HCT116 (cell line): ENCODE measurements at regions of chr1 and their contacts with region 1.

Region 1: GRCh38 chr1:235783148-235783776 is 83.4 kb downstream of the LYST start:
- DNase-seq: peak; percentile 26
- ATAC-seq: peak; percentile 49
- H3K4me3 ChIP-seq: no peak overlapping the region
- H3K27ac ChIP-seq: no peak overlapping the region
- H3K4me1 ChIP-seq: no peaks in the 10 kb centered on the region
- H3K27me3 ChIP-seq: no peaks in the 10 kb centered on the region
- CTCF ChIP-seq: peak; percentile 23 to 78 (median 29); a peak in 4 of 6 replicates
- POLR2A ChIP-seq: no peak
- RAD21 ChIP-seq: peak; percentile 80

Region 2: GRCh38 chr1:235100194-235100772 is 683.0 kb before region 1 on chr1:
- CTCF ChIA-PET with region 1: no interaction called
- POLR2A ChIA-PET with region 1: no interaction called
- RAD21 ChIA-PET with region 1: no interaction called
- intact Hi-C with region 1: loop called (anchors 5 kb)
- DNase-seq: no peak
- ATAC-seq: no peak
- H3K4me3 ChIP-seq: no peak overlapping the region
- H3K27ac ChIP-seq: no peak overlapping the region
- H3K4me1 ChIP-seq: peaks cover 4 to 14% of the 10 kb centered on the region in 2 experiments; a peak in 3 of 4 replicates
- H3K27me3 ChIP-seq: no peaks in the 10 kb centered on the region
- CTCF ChIP-seq: no peak
- POLR2A ChIP-seq: no peak
- RAD21 ChIP-seq: no peak

Region 3: GRCh38 chr1:235253219-235253962 is 529.9 kb before region 1 on chr1:
- CTCF ChIA-PET with region 1: no interaction called
- POLR2A ChIA-PET with region 1: no interaction called
- RAD21 ChIA-PET with region 1: no interaction called
- intact Hi-C with region 1: loop called (anchors 5 kb)
- DNase-seq: peak; percentile 54
- ATAC-seq: peak; percentile 100
- H3K4me3 ChIP-seq: no peak overlapping the region
- H3K27ac ChIP-seq: no peak overlapping the region
- H3K4me1 ChIP-seq: no peaks in the 10 kb centered on the region
- H3K27me3 ChIP-seq: no peaks in the 10 kb centered on the region
- CTCF ChIP-seq: peak; percentile 84 to 89 (median 87)
- POLR2A ChIP-seq: no peak
- RAD21 ChIP-seq: peak; percentile 89

Region 4: DNA sequence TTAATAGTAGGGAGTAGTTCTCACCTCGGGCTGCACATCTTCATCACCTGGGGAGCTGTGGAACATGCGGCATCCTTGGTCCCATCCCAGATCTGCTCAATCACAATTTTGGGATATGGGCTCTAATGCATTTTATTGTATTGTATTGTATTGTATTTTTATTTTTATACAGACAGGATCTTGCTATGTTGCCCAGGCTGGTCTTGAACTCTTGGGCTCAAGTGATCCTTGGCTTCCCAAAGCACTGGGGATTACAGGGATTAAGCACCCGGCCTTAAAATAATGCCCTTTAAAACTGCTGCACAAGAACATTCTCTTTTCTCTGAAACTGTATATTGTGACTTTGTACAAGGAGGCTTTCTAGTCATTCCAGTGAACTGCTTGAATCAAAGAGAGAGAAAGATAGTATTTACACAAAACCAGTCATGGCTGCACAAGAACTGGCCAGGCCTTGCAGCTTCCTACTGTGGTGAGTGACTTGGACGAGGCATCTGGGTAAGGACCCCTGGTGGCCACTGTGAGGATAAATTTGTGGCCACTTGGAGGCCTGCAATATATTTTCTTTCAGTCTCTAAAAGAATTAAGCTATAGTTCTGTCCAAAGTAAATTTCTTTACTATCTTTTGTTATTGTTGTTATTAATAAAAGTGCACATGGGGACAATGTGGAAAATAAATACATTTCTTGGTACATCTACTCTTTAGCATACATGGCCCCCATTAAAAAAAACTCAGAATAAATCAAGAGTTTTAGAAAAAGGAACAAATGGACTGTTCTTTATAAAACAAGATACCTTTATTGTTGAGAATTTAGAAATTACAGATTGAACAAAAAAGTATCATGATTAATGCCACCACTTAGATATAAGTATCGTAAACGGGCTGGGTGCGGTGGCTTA is 368.0 kb before region 1 on chr1:
- CTCF ChIA-PET with region 1: interaction called, 3 read pairs
- POLR2A ChIA-PET with region 1: no interaction called
- RAD21 ChIA-PET with region 1: no interaction called
- intact Hi-C with region 1: loop called (anchors 5 kb)
- DNase-seq: peak; percentile 59
- ATAC-seq: peak; percentile 83
- H3K4me3 ChIP-seq: no peak overlapping the region
- H3K27ac ChIP-seq: no peak overlapping the region
- H3K4me1 ChIP-seq: peaks cover 5 to 21% of the 10 kb centered on the region in 2 experiments; a peak in 3 of 4 replicates
- H3K27me3 ChIP-seq: no peaks in the 10 kb centered on the region
- CTCF ChIP-seq: peak; percentile 77 to 84 (median 80)
- POLR2A ChIP-seq: no peak
- RAD21 ChIP-seq: peak; percentile 79

Region 5: DNA sequence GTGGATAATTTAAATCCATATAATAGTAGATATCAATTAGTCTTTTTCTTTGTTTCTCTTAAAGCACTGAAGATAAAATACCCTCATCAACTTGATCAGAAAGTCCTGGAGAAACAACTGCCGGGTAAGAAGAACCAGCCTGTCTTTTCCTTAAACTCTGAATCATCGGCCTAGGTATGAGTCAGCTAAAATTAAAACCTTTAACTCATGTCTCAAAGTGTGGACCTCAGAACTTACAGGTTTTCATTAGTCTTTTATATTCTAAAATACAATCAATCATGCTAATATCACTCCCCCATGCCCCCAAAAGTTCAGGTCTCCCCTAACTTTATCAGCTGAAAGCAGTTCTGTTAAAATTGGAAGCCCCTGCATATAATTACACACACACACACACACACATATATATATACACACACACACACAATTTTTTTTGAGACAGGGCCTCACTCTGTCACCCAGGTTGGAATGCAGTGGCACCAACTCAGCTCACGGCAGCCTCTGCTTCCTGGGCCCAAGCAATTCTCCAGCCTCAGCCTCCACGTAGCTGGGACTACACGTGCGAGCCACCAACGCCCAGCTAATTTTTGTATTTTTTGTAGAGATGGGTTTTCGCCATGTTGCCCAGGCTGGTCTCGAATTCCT is 340.4 kb before region 1 on chr1:
- CTCF ChIA-PET with region 1: no interaction called
- POLR2A ChIA-PET with region 1: no interaction called
- RAD21 ChIA-PET with region 1: no interaction called
- intact Hi-C with region 1: loop called (anchors 10 kb)
- DNase-seq: peak; percentile 15
- ATAC-seq: peak; percentile 62; the same call in 1 of the 2 replicates
- H3K4me3 ChIP-seq: no peak overlapping the region
- H3K27ac ChIP-seq: peak overlapping the region; percentile 75
- H3K4me1 ChIP-seq: peaks cover 2 to 13% of the 10 kb centered on the region in 2 experiments; a peak in 3 of 4 replicates
- H3K27me3 ChIP-seq: no peaks in the 10 kb centered on the region
- CTCF ChIP-seq: no peak
- POLR2A ChIP-seq: no peak
- RAD21 ChIP-seq: no peak

Region 6: GRCh38 chr1:235513495-235514366 is 269.5 kb before region 1 on chr1:
- CTCF ChIA-PET with region 1: interaction called, 4 read pairs
- POLR2A ChIA-PET with region 1: no interaction called
- RAD21 ChIA-PET with region 1: no interaction called
- intact Hi-C with region 1: loop called (anchors 2 kb)
- DNase-seq: peak; percentile 59
- ATAC-seq: peak; percentile 72
- H3K4me3 ChIP-seq: no peak overlapping the region
- H3K27ac ChIP-seq: no peak overlapping the region
- H3K4me1 ChIP-seq: no peaks in the 10 kb centered on the region
- H3K27me3 ChIP-seq: no peaks in the 10 kb centered on the region
- CTCF ChIP-seq: peak; percentile 91 to 92 (median 91)
- POLR2A ChIP-seq: no peak
- RAD21 ChIP-seq: peak; percentile 92

Region 7: DNA sequence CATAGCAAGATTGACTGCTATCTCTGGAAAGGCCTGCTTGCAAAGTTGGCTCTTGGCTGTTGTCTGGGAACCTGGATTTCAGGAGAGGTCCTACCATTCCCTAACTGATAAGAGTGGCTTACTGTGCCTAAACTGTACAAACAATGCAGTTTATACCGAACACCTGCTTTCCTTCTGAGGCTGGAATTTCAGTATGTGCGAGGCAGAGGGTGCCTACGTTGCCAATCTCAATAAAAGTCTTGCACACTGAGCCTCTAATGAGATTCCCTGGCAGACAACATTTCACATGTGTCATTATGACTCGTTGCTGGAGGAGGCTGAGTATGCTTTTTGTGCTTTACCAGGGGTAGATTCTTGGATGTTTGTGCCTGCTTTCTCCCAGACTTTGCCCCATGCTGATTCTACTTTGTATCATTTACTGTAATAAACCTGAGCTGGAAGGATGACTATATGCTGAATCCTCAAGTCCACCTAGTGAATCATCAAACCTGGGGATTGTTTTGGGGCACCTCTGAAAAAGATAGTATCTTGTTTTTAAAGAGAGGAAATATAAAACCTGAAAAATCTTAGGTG is 74.8 kb before region 1 on chr1:
- CTCF ChIA-PET with region 1: no interaction called
- POLR2A ChIA-PET with region 1: no interaction called
- RAD21 ChIA-PET with region 1: no interaction called
- intact Hi-C with region 1: no loop called
- DNase-seq: peak; percentile 79
- ATAC-seq: peak; percentile 80
- H3K4me3 ChIP-seq: peak overlapping the region in 1 of 2 experiments; percentile 16; a peak in 1 of 4 replicates
- H3K27ac ChIP-seq: peak overlapping the region; percentile 25; the same call in 1 of the 2 replicates
- H3K4me1 ChIP-seq: peaks cover 0 to 26% of the 10 kb centered on the region in 2 experiments; a peak in 2 of 4 replicates
- H3K27me3 ChIP-seq: no peaks in the 10 kb centered on the region
- CTCF ChIP-seq: no peak
- POLR2A ChIP-seq: no peak
- RAD21 ChIP-seq: peak; percentile 18; the same call in 1 of the 2 replicates

Region 8: DNA sequence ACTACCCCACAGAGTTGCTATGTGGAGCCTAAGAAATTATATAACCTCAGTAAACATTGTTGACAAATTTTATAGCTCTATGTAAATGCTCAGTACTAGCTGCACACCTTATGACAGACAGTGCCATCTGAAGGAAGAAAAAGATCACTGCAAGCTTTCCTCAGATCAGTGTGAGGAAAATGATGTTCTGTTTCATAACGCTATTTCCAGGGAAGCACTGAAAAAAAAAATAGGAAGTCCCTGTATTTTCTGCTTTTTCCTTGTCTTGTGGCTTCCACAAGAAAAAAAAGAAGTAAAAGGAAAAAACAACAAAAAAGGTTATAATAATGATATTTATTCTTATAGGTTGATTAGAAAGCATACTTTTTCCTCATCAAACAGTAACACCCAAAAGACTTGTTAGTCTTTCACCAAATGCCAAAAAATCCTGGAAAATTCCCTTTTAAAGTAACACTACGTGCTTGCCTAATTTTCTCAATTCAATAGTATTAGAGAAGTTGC is 60.2 kb after region 1 on chr1:
- CTCF ChIA-PET with region 1: interaction called, 11 read pairs
- POLR2A ChIA-PET with region 1: no interaction called
- RAD21 ChIA-PET with region 1: no interaction called
- intact Hi-C with region 1: no loop called
- DNase-seq: peak; percentile 21
- ATAC-seq: peak; percentile 94
- H3K4me3 ChIP-seq: no peak overlapping the region
- H3K27ac ChIP-seq: no peak overlapping the region
- H3K4me1 ChIP-seq: peaks cover 0 to 5% of the 10 kb centered on the region in 2 experiments; a peak in 1 of 4 replicates
- H3K27me3 ChIP-seq: no peaks in the 10 kb centered on the region
- CTCF ChIP-seq: peak; percentile 40 to 62 (median 55); a peak in 5 of 6 replicates
- POLR2A ChIP-seq: no peak
- RAD21 ChIP-seq: peak; percentile 68